Mammary epithelial cell (primary cell): ENCODE measurements at regions of chr1 and their contacts with region 1.

Region 1: DNA sequence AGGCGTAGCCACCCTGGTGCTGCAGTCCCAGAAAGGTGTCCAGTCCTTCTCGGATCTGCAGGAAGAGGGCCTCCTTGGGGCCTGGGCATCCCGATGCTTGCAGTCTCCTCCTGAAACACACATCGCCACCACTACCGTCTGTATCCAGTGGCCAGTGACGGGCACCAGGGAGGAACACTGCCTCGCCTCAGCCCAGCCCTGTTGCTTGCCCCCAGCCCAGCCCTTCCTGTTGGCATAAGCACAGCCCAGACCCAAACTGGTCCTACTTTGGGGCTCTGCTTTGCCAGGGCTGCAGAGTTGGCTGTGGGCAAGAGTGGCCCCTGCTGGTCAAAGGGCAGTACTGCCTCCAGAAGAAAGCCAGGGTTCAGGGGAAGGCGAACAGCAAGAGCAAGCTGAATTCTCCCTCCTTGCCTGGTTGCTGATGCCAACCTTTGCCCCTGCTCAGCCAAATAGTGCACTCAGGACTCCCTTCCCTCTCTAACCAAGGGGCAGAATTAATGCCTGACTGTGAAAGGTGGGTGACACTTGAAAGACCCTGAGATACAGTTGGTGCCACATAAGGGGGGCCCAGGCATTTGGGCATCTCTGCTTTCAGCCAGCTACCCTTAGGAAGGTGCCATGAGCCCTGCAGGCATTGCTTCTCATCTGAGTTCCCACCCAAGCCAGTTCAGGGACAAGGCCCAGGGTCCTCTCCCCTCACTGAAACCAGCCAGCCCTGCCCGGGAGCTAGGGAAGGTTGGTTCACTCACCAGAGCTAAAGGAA is 11.1 kb upstream of the ARHGEF2 start:
- DNase-seq: peak; percentile 59
- H3K4me3 ChIP-seq: no peak overlapping the region
- H3K27ac ChIP-seq: no peak overlapping the region
- H3K4me1 ChIP-seq: peaks cover 14% of the 10 kb centered on the region
- H3K27me3 ChIP-seq: no peaks in the 10 kb centered on the region
- CTCF ChIP-seq: peak; percentile 99

Region 2: GRCh38 chr1:155759966-155760630 is 229.3 kb before region 1 on chr1:
- CTCF ChIA-PET with region 1: no interaction called
- dilution Hi-C with region 1: no loop called
- in situ Hi-C with region 1: no loop called
- intact Hi-C with region 1: loop called (anchors 5 kb)
- DNase-seq: peak; percentile 72
- H3K4me3 ChIP-seq: no peak overlapping the region
- H3K27ac ChIP-seq: peak overlapping the region; percentile 71
- H3K4me1 ChIP-seq: peaks cover 31% of the 10 kb centered on the region
- H3K27me3 ChIP-seq: no peaks in the 10 kb centered on the region
- CTCF ChIP-seq: no peak

Region 3: DNA sequence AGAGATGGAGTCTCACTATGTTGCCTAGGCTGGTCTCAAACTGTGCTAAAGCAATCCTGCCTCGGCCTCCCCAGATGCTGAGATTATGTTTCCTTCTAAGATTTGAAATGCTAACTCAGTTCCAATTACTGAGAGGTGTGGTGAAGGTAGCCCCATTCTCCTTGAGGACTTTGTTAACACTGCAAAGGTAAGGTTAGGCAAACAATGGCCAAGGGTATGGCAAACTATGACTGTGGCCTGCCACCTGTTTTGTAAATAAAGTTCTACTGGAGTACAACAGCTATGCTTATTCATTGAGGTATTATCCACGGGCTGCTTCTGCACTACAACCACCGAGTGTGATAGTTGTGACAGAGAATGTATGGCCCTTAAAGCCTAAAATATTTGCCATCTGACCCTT is 68.7 kb before region 1 on chr1:
- CTCF ChIA-PET with region 1: no interaction called
- dilution Hi-C with region 1: no loop called
- in situ Hi-C with region 1: no loop called
- intact Hi-C with region 1: no loop called
- DNase-seq: no peak
- H3K4me3 ChIP-seq: no peak overlapping the region
- H3K27ac ChIP-seq: no peak overlapping the region
- H3K4me1 ChIP-seq: no peaks in the 10 kb centered on the region
- H3K27me3 ChIP-seq: no peaks in the 10 kb centered on the region
- CTCF ChIP-seq: no peak

Region 4: GRCh38 chr1:155934097-155934935 is 55.1 kb before region 1 on chr1 and contains the start of gene KHDC4:
- CTCF ChIA-PET with region 1: interaction called, 4 read pairs
- dilution Hi-C with region 1: no loop called
- in situ Hi-C with region 1: loop called (anchors 5 kb)
- intact Hi-C with region 1: loop called (anchors 1 kb)
- DNase-seq: peak; percentile 99
- H3K4me3 ChIP-seq: peak within 1 kb of the TSS; percentile 82 to 95 (median 86)
- H3K27ac ChIP-seq: peak within 1 kb of the TSS; percentile 97
- H3K4me1 ChIP-seq: peaks cover 41% of the 10 kb centered on the region
- H3K27me3 ChIP-seq: no peaks in the 10 kb centered on the region
- CTCF ChIP-seq: no peak
- total RNA-seq, gene KHDC4: 35.3 to 56.5 TPM

Region 5: GRCh38 chr1:155946633-155947219 is 42.7 kb before region 1 on chr1:
- CTCF ChIA-PET with region 1: no interaction called
- dilution Hi-C with region 1: no loop called
- in situ Hi-C with region 1: no loop called
- intact Hi-C with region 1: no loop called
- DNase-seq: no peak
- H3K4me3 ChIP-seq: no peak overlapping the region
- H3K27ac ChIP-seq: no peak overlapping the region
- H3K4me1 ChIP-seq: peaks cover 19% of the 10 kb centered on the region
- H3K27me3 ChIP-seq: no peaks in the 10 kb centered on the region
- CTCF ChIP-seq: no peak

Region 6: DNA sequence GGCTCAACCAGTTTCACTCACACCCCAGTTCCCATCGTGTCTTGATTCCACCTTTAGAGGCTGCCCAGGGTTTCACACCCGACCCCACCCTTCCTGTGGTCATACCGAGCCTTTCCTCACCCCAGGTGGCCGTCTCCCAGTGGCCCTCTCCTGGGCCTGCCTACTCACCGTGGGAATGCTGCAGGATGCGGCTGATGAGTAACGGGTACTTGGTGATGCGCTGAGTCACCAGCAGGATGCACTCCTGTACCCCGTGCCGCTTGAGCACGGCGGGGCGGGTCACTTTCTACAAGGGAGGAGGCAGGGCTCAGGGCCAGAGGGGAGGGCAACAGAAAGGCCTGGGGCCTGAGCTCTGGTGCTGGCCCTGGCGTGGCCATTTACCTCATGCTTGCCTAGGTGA is 27.5 kb before region 1 on chr1:
- CTCF ChIA-PET with region 1: no interaction called
- dilution Hi-C with region 1: no loop called
- in situ Hi-C with region 1: no loop called
- intact Hi-C with region 1: loop called (anchors 1 kb)
- DNase-seq: peak; percentile 100
- H3K4me3 ChIP-seq: no peak overlapping the region
- H3K27ac ChIP-seq: peak overlapping the region; percentile 96
- H3K4me1 ChIP-seq: peaks cover 34% of the 10 kb centered on the region
- H3K27me3 ChIP-seq: no peaks in the 10 kb centered on the region
- CTCF ChIP-seq: peak; percentile 9 to 47

Region 7: DNA sequence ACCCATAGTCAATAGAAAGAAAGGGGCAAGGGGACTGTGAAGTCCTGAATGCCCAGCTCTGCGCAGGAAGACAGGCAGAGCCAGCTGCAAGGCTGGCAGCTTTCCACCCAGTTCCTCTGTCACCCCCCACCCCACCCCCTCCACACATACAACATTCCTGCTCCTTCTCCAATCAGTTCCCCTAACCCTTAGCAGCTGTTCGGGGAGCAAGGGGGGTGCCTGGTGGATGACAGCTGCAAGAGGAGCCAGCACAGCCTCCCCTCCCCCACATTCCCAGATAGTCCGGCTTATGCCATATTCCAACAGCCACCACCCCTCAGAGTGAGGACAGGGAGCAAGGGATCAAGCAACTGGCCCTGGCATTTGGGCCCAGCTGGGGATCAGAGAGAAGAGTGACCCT is 20.8 kb before region 1 on chr1:
- CTCF ChIA-PET with region 1: interaction called, 21 read pairs
- dilution Hi-C with region 1: no loop called
- in situ Hi-C with region 1: no loop called
- intact Hi-C with region 1: no loop called
- DNase-seq: no peak
- H3K4me3 ChIP-seq: no peak overlapping the region
- H3K27ac ChIP-seq: no peak overlapping the region
- H3K4me1 ChIP-seq: peaks cover 15% of the 10 kb centered on the region
- H3K27me3 ChIP-seq: no peaks in the 10 kb centered on the region
- CTCF ChIP-seq: no peak

Region 8: GRCh38 chr1:155978325-155978972 is 11.0 kb before region 1 on chr1 and contains the start of gene ARHGEF2:
- CTCF ChIA-PET with region 1: interaction called, 23 read pairs
- dilution Hi-C with region 1: no loop called
- in situ Hi-C with region 1: no loop called
- intact Hi-C with region 1: no loop called
- DNase-seq: peak; percentile 68
- H3K4me3 ChIP-seq: peak within 1 kb of the TSS; percentile 82 to 91 (median 91)
- H3K27ac ChIP-seq: peak within 1 kb of the TSS; percentile 76
- H3K4me1 ChIP-seq: peaks cover 73% of the 10 kb centered on the region
- H3K27me3 ChIP-seq: no peaks in the 10 kb centered on the region
- CTCF ChIP-seq: peak in 1 of 2 donors; percentile 29
- total RNA-seq, gene ARHGEF2: 79.4 to 161 TPM

Region 9: DNA sequence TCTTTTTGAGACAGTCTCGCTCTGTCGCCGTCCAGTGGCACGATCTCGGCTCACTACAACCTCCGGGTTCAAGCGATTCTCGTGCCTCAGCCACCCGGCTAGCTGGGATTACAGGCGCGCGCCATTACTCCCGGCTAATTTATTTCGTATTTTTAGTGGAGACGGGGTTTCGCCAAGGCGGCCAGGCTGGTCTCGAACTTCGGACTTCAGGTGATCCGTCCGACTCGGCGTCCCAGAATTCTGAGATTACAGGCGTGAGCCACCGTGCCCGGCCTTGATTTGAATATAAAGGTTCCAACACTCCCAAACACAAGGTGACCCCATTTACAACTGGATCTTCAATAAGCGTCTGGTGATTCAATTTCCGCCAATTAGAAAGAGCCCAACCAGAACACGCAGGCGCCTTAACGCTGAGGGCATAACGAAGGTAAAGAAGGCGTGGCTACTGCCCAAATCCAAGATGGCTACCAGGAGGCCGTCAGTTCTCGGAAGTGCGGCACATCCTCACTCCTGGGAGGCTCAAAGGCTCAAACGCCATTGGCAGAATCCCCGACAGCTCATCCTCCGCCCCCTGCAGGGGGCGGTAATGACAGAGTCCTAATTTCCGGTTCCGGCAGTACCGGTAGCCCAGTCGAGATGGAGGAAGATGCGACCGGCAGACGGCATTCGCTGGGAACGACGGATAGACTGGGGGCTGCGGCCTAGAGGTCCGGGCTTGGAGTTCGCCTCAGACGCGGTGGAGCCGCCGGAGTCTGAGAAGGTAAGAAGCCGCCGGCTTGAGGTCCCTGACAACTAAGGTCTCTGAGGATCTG is 204.3 kb after region 1 on chr1 and contains the start of gene SLC25A44:
- CTCF ChIA-PET with region 1: interaction called, 10 read pairs
- dilution Hi-C with region 1: no loop called
- in situ Hi-C with region 1: no loop called
- intact Hi-C with region 1: no loop called
- DNase-seq: peak; percentile 99
- H3K4me3 ChIP-seq: peak within 1 kb of the TSS; percentile 79 to 93 (median 80)
- H3K27ac ChIP-seq: peak within 1 kb of the TSS; percentile 74
- H3K4me1 ChIP-seq: peaks cover 9% of the 10 kb centered on the region
- H3K27me3 ChIP-seq: no peaks in the 10 kb centered on the region
- CTCF ChIP-seq: peak in 1 of 2 donors; percentile 58
- total RNA-seq, gene SLC25A44: 15.8 to 18.5 TPM